Motor neuron (in vitro differentiated cells): ENCODE measurements at regions of chr18 and their contacts with region 1.

Region 1: GRCh38 chr18:26771524-26771923 is 94.0 kb downstream of the AQP4 start:
- ATAC-seq: peak in 3 of 8 experiments; percentile 21 to 52 (median 49)
- H3K4me3 ChIP-seq: no peak overlapping the region
- H3K27ac ChIP-seq: no peak overlapping the region
- H3K4me1 ChIP-seq: no peaks in the 10 kb centered on the region

Region 2: DNA sequence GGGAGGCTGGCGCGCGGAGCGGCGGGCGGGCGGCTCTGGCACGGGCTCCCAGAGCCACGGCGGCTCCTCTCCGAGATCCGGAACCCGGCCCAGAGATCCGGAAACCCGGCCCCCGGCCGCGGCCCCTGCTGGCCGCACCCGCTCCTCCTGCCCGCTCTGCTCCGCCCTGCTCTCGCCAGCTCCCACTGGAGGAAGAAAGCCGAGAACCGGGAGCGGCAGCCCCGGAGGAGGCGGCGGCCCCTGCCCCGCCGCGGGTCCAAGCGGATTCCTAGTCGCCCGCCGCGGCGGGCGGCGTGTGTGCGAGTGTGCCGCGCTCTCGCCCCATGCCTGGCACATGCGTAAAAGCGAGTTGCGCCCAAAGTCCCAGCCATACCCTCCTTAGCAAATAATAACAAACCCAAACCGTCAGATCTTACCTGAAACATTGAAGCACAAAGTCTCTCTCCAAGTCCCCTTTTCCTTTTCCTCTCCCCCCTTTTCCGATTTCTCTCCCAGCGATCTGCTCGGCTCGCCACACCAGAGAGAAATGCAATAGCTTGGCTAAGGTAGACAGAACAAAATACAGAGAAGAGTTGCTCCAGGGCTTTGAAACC is 114.5 kb before region 1 on chr18:
- in situ Hi-C with region 1: loop called in 1 of 9 experiments (anchors 25 kb)
- ATAC-seq: peak; percentile 61 to 83 (median 69)
- H3K4me3 ChIP-seq: peak overlapping the region; percentile 66 to 88 (median 73)
- H3K27ac ChIP-seq: peak overlapping the region; percentile 85 to 86
- H3K4me1 ChIP-seq: peaks cover 10% of the 10 kb centered on the region in 2 donors